ENCODE measurements at regions of chr9 and their contacts with region 1.

Region 1: DNA sequence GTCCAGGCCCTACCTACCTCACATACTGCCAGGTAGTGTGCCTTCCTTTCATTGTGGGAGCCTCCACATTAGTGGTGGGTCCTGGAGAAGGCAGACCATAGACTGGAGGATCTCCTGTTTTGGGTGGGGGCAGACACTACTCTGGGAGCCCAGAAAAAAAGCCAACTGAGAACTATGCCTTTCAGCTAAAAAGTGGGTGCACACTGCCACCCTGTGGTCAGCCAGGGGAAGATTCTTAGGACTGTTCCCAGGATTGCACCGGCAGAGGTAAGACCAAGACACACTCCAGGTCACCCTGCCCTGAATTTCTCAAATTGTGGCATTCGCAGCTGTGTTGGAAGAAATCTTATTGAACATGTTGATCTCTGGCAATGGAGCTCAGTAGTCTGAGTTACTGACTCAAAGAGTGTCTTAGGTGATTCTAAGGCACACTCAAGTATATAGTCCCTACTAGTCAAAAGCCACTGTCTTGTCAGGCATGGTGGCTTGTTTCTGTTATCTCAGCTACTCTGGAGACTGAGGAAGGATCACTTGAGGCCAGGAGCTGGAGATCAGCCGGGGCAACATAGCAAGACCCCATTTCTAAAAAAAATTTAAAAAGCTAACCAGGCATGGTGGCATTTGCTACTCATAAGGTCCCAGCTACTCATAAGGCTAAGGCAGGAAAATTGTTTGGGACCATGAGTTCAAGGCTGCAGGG is 3.6 kb downstream of the SIGMAR1 start:
- DNase-seq: peak; percentile 38 to 95 (median 74)

Region 2: GRCh38 chr9:34611829-34612630 is 22.0 kb before region 1 on chr9 and contains the start of gene RPP25L:
- intact Hi-C with region 1: loop called (anchors 1 kb)
- DNase-seq: peak; percentile 62 to 96 (median 82)